Heart right ventricle (tissue), 16 donors: ENCODE measurements at regions of chr2 and their contacts with region 1.

Region 1: DNA sequence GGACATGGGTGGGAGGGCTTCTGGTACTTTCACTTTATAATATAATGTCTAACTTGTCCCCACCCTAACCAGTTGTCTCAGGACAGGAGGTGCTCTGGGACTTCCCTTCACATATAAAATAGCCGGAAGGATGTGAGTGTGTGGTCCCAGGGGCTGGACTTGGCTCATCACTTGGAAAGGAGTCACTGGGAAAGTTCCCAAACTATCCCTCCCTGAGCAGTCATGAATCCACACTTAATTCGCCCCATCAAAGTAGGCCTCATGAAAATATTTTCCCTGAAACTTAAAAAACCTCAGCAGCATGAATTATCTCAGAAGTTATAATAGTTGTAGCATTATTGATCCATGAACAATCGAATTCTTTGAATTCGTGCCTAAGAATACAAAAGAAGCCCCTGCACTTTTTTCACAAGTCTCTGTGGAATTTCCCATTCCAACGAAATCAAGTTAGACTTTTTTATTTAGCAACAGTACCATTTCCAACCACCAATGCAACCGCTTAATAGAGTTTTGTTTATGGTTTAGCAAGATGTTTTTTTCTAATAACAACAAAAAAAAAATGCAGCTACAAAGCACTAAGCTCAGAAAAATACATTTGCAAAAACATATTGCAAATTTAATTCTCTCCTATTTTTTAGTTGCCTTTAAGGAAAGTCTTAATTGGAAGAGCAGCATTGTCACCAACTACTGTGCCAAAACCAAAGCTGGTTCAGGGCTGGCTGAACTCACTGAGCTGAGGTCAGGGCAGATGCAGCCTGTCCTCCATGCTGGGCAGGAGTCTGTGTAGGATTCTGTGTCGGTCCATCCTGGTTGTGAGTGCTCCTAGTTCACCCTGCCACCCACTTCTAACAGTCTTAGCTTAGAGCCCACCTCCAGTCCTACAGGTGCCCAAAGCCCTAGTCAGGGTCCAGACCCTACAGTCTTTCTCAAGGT is 68.8 kb upstream of the SPTBN1 start:
- DNase-seq: peak; percentile 40 to 81
- ATAC-seq: peak; percentile 84 to 93 (median 90)
- H3K4me3 ChIP-seq: no peak overlapping the region
- H3K27ac ChIP-seq: peak overlapping the region; percentile 63 to 95 (median 80)
- H3K4me1 ChIP-seq: peaks cover 4 to 70% (median 42%) of the 10 kb centered on the region in 9 donors
- H3K27me3 ChIP-seq: no peaks in the 10 kb centered on the region
- CTCF ChIP-seq: peak in 4 of 9 donors; percentile 9 to 31 (median 16)

Region 2: DNA sequence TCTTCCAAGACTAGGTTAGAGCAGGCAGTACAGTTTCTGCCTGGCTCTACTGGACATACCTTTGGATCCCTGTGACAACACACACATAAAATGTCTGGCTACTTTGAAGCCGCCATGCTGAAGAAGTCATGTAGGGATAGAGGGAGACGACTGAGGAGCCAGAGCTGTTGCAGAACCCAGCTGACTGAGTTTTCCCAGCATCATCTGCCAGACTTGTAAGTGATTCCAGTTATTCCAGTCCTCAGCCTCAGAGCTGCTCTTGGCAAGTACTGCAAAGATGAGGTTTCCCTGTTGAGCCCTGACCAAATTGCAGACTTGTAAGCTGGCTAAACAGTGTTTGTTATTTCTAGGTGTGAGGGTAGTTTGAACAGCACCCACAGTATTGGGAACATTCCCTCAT is 99.8 kb before region 1 on chr2:
- intact Hi-C with region 1: loop called in 1 of 10 experiments (anchors 5 kb)
- DNase-seq: peak in 1 of 2 donors; percentile 46
- ATAC-seq: peak; percentile 70 to 95 (median 78)
- H3K4me3 ChIP-seq: no peak overlapping the region
- H3K27ac ChIP-seq: peak overlapping the region in 4 of 10 donors; percentile 22 to 62 (median 36)
- H3K4me1 ChIP-seq: peaks cover 0 to 13% (median 4%) of the 10 kb centered on the region in 9 donors
- H3K27me3 ChIP-seq: no peaks in the 10 kb centered on the region
- CTCF ChIP-seq: no peak

Region 3: DNA sequence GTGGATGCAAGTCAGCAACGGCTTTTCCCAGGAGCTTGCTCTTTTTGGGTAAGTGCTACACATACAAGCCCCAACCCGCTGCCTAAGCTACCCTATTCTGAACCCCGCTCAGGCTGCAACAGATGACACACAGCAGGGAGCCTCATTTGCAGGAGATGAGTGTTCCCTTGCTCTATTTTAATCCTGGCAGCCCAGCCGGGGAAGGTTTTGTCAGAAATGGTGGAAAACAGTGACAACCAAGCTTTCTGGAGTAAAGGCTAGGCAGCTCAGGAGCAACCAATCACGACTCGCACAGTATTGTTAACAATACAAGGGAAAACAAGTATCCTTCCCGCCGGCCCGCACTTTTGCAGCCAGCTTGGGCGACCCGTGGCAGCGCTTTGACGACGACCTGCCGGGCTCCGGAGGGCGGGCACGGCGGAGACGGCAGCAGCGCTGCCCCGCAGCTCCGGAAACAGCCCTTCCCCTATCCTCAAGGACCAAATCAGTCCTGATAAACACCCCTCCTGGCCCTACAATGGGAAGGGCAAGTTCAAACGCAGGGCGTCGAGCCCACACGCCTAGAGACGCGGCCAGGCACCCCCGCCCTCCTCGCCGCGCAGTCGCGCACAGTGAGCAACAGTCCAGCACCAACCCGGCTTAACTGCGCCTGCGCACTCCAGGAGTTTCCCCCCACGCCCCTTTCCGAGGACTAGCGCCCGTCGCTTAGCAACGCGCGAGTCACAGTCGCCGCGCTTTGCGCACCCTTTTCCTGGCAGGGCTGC is 57.0 kb before region 1 on chr2:
- intact Hi-C with region 1: loop called in 1 of 10 experiments (anchors 10 kb)
- DNase-seq: peak; percentile 98
- ATAC-seq: peak; percentile 98 to 99 (median 99)
- H3K4me3 ChIP-seq: peak overlapping the region; percentile 9 to 74 (median 62)
- H3K27ac ChIP-seq: peak overlapping the region; percentile 75 to 97 (median 92)
- H3K4me1 ChIP-seq: peaks cover 2 to 26% (median 19%) of the 10 kb centered on the region in 9 donors
- H3K27me3 ChIP-seq: peaks cover 0 to 7% (median 0%) of the 10 kb centered on the region in 7 donors
- CTCF ChIP-seq: no peak

Region 4: GRCh38 chr2:55213822-55214221 is 826.5 kb after region 1 on chr2:
- intact Hi-C with region 1: no loop called
- DNase-seq: no peak
- ATAC-seq: no peak
- H3K4me3 ChIP-seq: no peak overlapping the region
- H3K27ac ChIP-seq: no peak overlapping the region
- H3K4me1 ChIP-seq: no peaks in the 10 kb centered on the region
- H3K27me3 ChIP-seq: no peaks in the 10 kb centered on the region
- CTCF ChIP-seq: no peak